B cell (primary cell): ENCODE measurements at regions of chr17 and their contacts with region 1.

Region 1: DNA sequence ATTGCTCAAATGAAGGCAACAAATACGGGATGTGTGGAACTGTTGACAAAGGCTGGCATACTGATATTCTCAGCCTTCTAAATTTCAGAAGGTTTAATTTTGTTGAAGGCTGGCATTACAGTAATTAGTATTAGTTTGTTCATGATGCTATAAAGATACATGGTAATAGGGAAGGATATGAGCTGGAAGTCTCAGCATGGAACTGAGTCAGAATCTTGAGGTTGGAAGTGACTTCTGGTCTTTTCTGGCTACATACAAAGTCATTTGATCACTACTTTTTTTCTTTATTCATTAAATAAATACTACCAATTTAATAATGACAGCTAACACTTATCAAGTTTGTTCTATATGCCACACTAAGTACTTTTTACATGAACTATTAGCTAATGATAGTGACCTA is 22.6 kb downstream of the RABEP1 start:
- DNase-seq: no peak
- ATAC-seq: no peak
- H3K4me3 ChIP-seq: no peak overlapping the region
- H3K4me3 Mint-ChIP-seq: no peak overlapping the region
- H3K27ac ChIP-seq: peak overlapping the region in 1 of 2 donors; percentile 16
- H3K27ac Mint-ChIP-seq: no peak overlapping the region
- H3K4me1 ChIP-seq: peaks cover 28 to 38% of the 10 kb centered on the region in 2 donors
- H3K4me1 Mint-ChIP-seq: peaks cover 63% of the 10 kb centered on the region
- H3K27me3 ChIP-seq: no peaks in the 10 kb centered on the region
- H3K27me3 Mint-ChIP-seq: no peaks in the 10 kb centered on the region
- CTCF ChIP-seq: no peak

Region 2: GRCh38 chr17:4948931-4949320 is 355.7 kb before region 1 on chr17:
- CTCF ChIA-PET with region 1: no interaction called
- POLR2A ChIA-PET with region 1: no interaction called
- intact Hi-C with region 1: no loop called
- DNase-seq: peak; percentile 90
- ATAC-seq: peak; percentile 50
- H3K4me3 ChIP-seq: peak overlapping the region; percentile 59 to 99 (median 96)
- H3K4me3 Mint-ChIP-seq: peak overlapping the region; percentile 98
- H3K27ac ChIP-seq: peak overlapping the region; percentile 73 to 93
- H3K27ac Mint-ChIP-seq: peak overlapping the region; percentile 99
- H3K4me1 ChIP-seq: peaks cover 37 to 45% of the 10 kb centered on the region in 2 donors
- H3K4me1 Mint-ChIP-seq: peaks cover 46% of the 10 kb centered on the region
- H3K27me3 ChIP-seq: no peaks in the 10 kb centered on the region
- H3K27me3 Mint-ChIP-seq: no peaks in the 10 kb centered on the region
- CTCF ChIP-seq: no peak

Region 3: DNA sequence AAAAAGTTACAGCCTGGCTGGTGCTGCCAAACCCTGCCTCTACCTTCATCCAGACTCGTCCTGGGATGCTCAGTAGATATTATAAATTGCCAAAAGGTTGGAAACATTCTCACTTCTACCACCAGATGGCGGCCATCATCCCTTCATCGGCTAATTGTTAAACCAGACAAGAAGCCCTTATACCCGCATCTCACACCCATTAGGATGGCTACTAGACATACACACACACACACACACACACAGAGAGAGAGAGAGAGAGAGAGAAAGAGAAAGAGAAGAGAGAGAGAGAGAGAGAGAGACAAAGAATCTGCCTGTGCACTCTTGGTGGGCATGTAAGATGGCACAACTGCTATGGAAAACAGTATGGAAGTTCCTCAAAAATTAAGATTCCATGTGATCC is 55.0 kb before region 1 on chr17:
- CTCF ChIA-PET with region 1: interaction called, 89 read pairs
- POLR2A ChIA-PET with region 1: interaction called, 4 read pairs
- intact Hi-C with region 1: loop called (anchors 1 kb)
- DNase-seq: peak; percentile 84
- ATAC-seq: peak; percentile 86
- H3K4me3 ChIP-seq: no peak overlapping the region
- H3K4me3 Mint-ChIP-seq: no peak overlapping the region
- H3K27ac ChIP-seq: no peak overlapping the region
- H3K27ac Mint-ChIP-seq: peak overlapping the region; percentile 22
- H3K4me1 ChIP-seq: peaks cover 21 to 24% of the 10 kb centered on the region in 2 donors
- H3K4me1 Mint-ChIP-seq: peaks cover 40% of the 10 kb centered on the region
- H3K27me3 ChIP-seq: no peaks in the 10 kb centered on the region
- H3K27me3 Mint-ChIP-seq: no peaks in the 10 kb centered on the region
- CTCF ChIP-seq: peak; percentile 74

Region 4: DNA sequence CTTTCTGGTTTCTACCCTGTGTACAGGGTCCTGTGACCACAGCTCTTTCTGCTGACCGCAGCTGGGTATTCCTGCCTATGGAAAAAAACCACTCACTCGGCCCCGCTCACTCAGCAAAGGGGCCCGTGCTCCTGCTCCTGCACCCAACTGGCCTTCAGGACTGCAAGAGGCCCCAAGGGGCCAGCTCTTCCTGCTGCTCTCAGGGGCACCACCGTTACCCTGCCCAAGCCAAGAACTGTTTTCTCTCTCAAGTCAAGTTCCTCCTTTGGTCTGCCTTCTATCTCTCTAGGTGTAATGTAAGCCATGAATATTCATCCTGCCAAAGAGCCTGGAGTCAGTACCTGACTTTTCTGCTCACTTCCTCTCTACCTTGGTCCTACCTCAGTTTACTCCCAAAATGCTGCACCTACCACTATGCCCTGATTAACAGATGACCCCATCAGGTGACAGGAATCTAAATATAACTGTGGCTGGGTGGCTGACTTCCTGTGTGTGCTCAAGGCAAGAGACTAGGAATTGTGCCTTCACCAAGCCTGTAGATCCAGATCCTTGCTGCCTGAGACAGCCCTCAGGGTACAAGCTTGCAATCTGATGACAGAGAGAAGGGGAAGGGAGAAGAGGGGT is 49.6 kb before region 1 on chr17:
- CTCF ChIA-PET with region 1: interaction called, 89 read pairs
- POLR2A ChIA-PET with region 1: interaction called, 4 read pairs
- intact Hi-C with region 1: no loop called
- DNase-seq: peak; percentile 63
- ATAC-seq: peak; percentile 84
- H3K4me3 ChIP-seq: peak overlapping the region; percentile 15 to 53 (median 21)
- H3K4me3 Mint-ChIP-seq: peak overlapping the region; percentile 82
- H3K27ac ChIP-seq: peak overlapping the region; percentile 59 to 78
- H3K27ac Mint-ChIP-seq: peak overlapping the region; percentile 92
- H3K4me1 ChIP-seq: peaks cover 40 to 50% of the 10 kb centered on the region in 2 donors
- H3K4me1 Mint-ChIP-seq: peaks cover 56% of the 10 kb centered on the region
- H3K27me3 ChIP-seq: no peaks in the 10 kb centered on the region
- H3K27me3 Mint-ChIP-seq: no peaks in the 10 kb centered on the region
- CTCF ChIP-seq: no peak

Region 5: GRCh38 chr17:7021993-7022778 is 1717.5 kb after region 1 on chr17:
- CTCF ChIA-PET with region 1: no interaction called
- POLR2A ChIA-PET with region 1: no interaction called
- intact Hi-C with region 1: no loop called
- DNase-seq: peak; percentile 92
- ATAC-seq: peak; percentile 82
- H3K4me3 ChIP-seq: peak overlapping the region in 4 of 5 experiments; percentile 44 to 71 (median 62)
- H3K4me3 Mint-ChIP-seq: peak overlapping the region; percentile 82
- H3K27ac ChIP-seq: peak overlapping the region; percentile 73 to 80
- H3K27ac Mint-ChIP-seq: peak overlapping the region; percentile 92
- H3K4me1 ChIP-seq: peaks cover 21 to 27% of the 10 kb centered on the region in 2 donors
- H3K4me1 Mint-ChIP-seq: peaks cover 28% of the 10 kb centered on the region
- H3K27me3 ChIP-seq: no peaks in the 10 kb centered on the region
- H3K27me3 Mint-ChIP-seq: no peaks in the 10 kb centered on the region
- CTCF ChIP-seq: peak; percentile 98